ENCODE measurements at regions of chr3 and their contacts with region 1.

Region 1: GRCh38 chr3:169945313-169945712 is 21.3 kb upstream of the SEC62 start:
- DNase-seq: no peak
- ATAC-seq: no peak
- H3K4me3 ChIP-seq: no peak overlapping the region
- H3K27ac ChIP-seq: no peak overlapping the region
- H3K4me1 ChIP-seq: no peaks in the 10 kb centered on the region
- H3K27me3 ChIP-seq: peaks cover 23% of the 10 kb centered on the region
- CTCF ChIP-seq: no peak
- POLR2A ChIP-seq: no peak
- RAD21 ChIP-seq: no peak

Region 2: DNA sequence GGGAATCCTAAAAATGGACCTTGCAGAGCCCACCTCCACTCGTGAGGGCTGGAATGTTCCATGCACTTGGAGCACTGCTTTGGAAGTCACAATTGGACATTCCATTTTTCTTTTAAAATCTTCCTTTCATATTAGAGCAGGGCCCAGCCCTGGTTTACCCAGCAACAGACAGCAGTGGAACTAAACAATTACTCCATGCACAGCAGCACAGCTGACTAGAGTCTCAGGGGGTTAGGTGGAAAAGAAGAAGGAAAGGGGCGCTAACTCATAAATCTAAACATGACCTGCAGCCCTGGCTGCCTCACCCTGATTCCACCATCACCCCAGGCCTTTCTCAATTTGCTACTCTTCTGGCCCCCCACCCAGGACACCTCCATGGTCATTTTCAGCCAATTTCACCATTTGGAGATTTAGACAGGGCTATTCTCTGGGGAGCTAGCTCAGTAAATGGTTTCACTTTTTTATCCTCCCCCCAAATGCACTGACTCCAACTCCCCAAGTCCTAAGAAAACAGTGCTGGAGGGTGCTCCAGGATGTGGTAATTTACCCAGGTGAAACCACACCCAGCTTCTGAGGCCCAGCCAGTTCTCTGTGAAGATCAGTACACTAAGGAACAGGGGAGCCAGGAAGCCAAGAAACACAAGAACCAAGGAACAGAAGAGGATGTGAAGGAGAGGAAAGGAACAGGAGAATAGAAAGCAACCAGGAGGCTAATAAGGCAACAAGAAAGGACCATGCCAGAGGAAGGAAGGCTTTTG is 74.0 kb before region 1 on chr3:
- CTCF ChIA-PET with region 1: no interaction called
- POLR2A ChIA-PET with region 1: no interaction called
- dilution Hi-C with region 1: no loop called
- in situ Hi-C with region 1: no loop called
- intact Hi-C with region 1: loop called (anchors 5 kb)
- DNase-seq: no peak
- ATAC-seq: no peak
- H3K4me3 ChIP-seq: no peak overlapping the region
- H3K27ac ChIP-seq: no peak overlapping the region
- H3K4me1 ChIP-seq: no peaks in the 10 kb centered on the region
- H3K27me3 ChIP-seq: peaks cover 8% of the 10 kb centered on the region
- CTCF ChIP-seq: no peak
- POLR2A ChIP-seq: no peak
- RAD21 ChIP-seq: no peak

Region 3: DNA sequence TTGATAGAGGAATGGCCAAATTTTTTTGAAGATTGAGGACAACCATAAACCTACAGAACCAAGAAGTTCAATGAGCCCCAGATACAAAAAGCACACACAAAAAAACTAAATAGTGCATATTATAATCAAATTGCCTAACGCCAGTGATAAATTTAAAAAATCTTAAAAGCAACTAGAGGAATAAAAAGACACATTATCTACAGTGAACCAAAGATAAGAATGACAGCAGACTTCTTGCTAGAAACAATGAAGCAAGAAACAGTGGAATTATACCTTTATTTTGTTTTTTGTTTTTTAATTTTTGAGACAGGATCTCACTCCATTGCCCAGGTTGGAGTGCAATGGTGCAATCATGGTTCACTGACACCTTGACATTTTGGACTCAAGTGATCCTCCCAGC is 43.9 kb before region 1 on chr3:
- CTCF ChIA-PET with region 1: no interaction called
- POLR2A ChIA-PET with region 1: no interaction called
- dilution Hi-C with region 1: no loop called
- in situ Hi-C with region 1: no loop called
- intact Hi-C with region 1: no loop called
- DNase-seq: no peak
- ATAC-seq: no peak
- H3K4me3 ChIP-seq: no peak overlapping the region
- H3K27ac ChIP-seq: no peak overlapping the region
- H3K4me1 ChIP-seq: no peaks in the 10 kb centered on the region
- H3K27me3 ChIP-seq: no peaks in the 10 kb centered on the region
- CTCF ChIP-seq: no peak
- POLR2A ChIP-seq: no peak
- RAD21 ChIP-seq: no peak

Measured in IMR-90 (cell line).